Vagina (tissue), 2 donors: ENCODE measurements at regions of chr4 and their contacts with region 1.

Region 1: DNA sequence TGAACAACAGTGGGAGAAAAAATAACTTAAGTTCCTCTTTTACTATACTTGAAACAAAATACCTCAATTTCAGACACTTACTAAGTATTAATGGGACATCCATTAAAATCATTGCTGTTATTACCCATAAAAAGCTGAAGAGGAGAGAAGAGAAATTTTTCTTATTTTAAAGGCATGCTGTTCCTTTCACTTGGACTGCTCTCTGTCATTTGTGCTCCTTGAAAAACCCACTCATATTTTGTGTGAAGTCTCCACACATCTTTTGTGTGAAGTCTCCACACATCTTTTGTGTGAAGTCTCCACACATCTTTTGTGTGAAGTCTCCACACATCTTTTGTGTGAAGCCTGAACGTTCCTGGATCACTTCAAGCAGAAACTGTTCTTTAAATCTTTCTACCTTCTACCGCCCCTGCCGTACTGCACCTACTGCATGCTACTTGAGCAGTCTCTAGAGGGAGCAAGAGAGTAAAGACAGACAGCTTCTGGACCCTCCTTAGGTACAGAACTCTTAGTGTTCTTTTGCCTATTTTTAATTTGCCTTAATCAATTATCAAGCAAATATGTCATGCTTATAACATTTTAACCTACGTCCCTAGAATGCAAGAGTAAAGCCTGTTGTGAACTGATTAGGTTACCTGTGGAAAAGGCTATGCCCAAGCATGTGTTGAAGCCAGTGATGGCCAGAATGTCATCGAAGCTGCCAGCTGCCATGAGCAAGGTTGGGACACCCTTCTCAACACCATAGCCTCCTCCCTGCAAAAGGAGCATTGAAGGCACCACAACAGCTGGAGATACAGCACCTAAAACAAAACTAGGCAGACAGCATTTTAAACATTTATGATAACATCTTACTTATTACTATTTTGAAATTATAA is 27.1 kb upstream of the SLC9B1 start:
- DNase-seq: no peak
- H3K4me3 ChIP-seq: no peak overlapping the region
- H3K27ac ChIP-seq: no peak overlapping the region
- H3K4me1 ChIP-seq: no peaks in the 10 kb centered on the region
- H3K27me3 ChIP-seq: no peaks in the 10 kb centered on the region
- CTCF ChIP-seq: peak in 1 of 3 experiments; percentile 49
- POLR2A ChIP-seq: no peak

Region 2: GRCh38 chr4:102959498-102959897 is 87.2 kb before region 1 on chr4:
- intact Hi-C with region 1: no loop called
- DNase-seq: no peak
- H3K4me3 ChIP-seq: no peak overlapping the region
- H3K27ac ChIP-seq: no peak overlapping the region
- H3K4me1 ChIP-seq: no peaks in the 10 kb centered on the region
- H3K27me3 ChIP-seq: no peaks in the 10 kb centered on the region
- CTCF ChIP-seq: no peak
- POLR2A ChIP-seq: no peak

Region 3: DNA sequence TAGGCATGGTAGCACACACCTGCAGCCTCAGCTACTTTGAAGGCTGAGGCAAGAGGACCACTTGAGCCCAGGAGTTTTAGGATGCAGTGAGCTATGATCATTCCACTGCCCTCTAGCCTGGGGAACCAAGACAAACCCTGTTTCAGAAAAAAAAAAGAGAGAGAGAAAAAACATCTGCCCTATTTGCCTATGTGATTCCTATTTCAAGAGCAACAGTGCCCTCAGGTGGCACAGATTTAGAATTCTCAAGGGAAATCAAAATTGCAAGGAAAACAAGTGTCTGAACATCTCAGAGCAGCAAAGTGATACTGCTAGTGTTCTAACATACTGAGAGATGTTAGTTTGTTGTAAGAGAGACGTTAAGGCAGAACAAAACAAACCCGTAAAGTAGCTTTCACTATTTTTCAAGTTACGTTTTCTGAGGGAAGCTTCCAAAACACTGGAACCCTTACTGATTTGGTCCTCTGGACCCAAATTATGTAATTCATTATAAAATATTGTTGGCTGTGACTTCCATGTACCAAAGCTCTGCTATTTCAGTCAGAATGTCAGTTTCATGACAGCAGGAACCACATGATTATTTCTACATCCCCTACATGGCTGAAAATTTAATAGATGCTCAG is 45.1 kb after region 1 on chr4:
- intact Hi-C with region 1: loop called (anchors 2 kb)
- DNase-seq: no peak
- H3K4me3 ChIP-seq: no peak overlapping the region
- H3K27ac ChIP-seq: no peak overlapping the region
- H3K4me1 ChIP-seq: no peaks in the 10 kb centered on the region
- H3K27me3 ChIP-seq: no peaks in the 10 kb centered on the region
- CTCF ChIP-seq: peak in 1 of 3 experiments; percentile 17
- POLR2A ChIP-seq: no peak